ENCODE measurements at regions of chr2 and their contacts with region 1.

Region 1: DNA sequence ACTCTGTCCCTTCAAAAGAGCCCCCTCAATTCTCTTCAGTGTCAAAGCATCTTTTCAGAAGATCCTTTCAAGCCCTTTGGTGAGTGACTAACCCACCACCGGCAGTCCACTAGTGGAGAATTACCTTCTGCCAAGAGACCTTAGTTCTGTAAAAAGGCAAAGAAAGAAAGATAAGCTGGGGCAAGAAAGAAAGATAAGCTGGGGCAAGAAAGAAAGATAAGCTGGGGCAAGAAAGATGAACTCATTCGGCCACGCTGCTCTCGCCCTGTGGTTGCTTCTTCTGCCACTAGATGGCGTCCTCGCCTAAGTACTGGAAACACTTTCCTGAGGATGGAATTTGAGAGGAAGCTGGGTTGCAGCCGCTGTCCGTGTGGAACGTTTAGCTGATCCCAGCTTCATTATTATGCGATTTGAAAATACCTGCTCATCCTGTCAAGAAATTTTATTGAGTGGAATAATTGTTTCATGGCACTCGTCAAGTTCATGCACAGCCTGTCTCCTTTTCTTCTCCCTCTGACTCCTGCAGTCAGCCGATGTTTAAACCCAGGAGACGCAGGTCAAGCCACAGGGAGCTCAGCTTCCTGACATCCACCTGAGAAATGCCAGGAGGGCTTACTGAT is 17.3 kb upstream of the ANXA4 start:
- DNase-seq: peak; percentile 74
- ATAC-seq: peak; percentile 75
- H3K4me3 Mint-ChIP-seq: peak overlapping the region; percentile 52
- H3K27ac Mint-ChIP-seq: no peak overlapping the region
- H3K4me1 Mint-ChIP-seq: peaks cover 6% of the 10 kb centered on the region
- H3K27me3 Mint-ChIP-seq: peaks cover 6% of the 10 kb centered on the region
- CTCF ChIP-seq: peak; percentile 84

Region 2: DNA sequence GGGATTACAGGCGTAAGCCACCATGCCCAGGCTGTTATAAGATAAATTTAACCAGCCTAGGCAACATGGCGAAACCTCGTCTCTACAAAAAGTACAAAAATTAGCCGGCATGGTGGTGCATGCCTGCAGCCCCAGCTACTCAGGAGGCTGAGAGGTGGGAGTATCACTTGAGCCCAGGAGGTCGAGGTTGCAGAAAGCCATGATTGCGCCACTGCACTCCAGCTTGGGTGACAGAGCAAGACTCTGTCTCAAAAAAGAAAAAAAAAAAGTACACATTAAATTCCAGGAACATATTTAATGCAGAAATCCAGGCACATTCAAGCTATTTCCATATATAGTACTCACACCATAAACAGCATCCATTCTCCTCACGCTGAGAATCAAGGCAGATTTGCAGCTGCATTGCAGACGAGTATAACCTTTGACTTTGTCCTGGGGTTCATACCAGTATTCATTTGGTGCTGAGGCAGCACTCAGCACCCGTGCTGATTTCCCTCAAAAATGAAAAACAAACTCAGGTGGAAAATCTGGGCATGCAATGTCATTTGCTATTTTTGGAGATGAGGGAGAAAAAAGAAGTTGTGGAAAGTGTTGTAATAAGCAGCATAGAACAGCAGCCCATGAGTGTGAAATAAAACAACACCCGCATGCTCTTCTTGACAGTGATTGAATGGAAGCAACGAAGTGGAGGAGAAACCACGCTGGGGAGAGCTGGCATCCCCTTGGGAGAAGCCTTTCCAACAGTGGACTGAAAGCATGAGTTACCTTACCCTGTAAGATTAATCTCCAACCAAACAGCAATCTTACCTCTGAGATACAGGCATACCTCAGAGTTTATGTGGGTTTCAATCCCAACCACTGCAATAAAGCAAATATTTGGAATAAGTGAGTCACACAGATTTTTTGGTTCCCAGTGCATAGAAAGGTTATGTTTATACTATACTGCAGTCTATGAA is 29.5 kb before region 1 on chr2:
- CTCF ChIA-PET with region 1: no interaction called
- POLR2A ChIA-PET with region 1: no interaction called
- intact Hi-C with region 1: no loop called
- DNase-seq: no peak
- ATAC-seq: no peak
- H3K4me3 Mint-ChIP-seq: no peak overlapping the region
- H3K27ac Mint-ChIP-seq: no peak overlapping the region
- H3K4me1 Mint-ChIP-seq: peaks cover 28% of the 10 kb centered on the region
- H3K27me3 Mint-ChIP-seq: peaks cover 46% of the 10 kb centered on the region
- CTCF ChIP-seq: no peak

Region 3: GRCh38 chr2:69741619-69742466 is 17.2 kb after region 1 on chr2 and contains the start of gene ANXA4:
- CTCF ChIA-PET with region 1: interaction called, 21 read pairs
- POLR2A ChIA-PET with region 1: interaction called, 9 read pairs
- intact Hi-C with region 1: loop called (anchors 2 kb)
- DNase-seq: peak; percentile 64
- ATAC-seq: peak; percentile 85
- H3K4me3 Mint-ChIP-seq: peak within 1 kb of the TSS; percentile 95
- H3K27ac Mint-ChIP-seq: peak within 1 kb of the TSS; percentile 89
- H3K4me1 Mint-ChIP-seq: peaks cover 39% of the 10 kb centered on the region
- H3K27me3 Mint-ChIP-seq: no peaks in the 10 kb centered on the region
- CTCF ChIP-seq: no peak
- total RNA-seq, gene ANXA4: 32.0 and 35.4 TPM in 2 replicates

Region 4: GRCh38 chr2:69774984-69775982 is 50.6 kb after region 1 on chr2:
- CTCF ChIA-PET with region 1: interaction called, 11 read pairs
- POLR2A ChIA-PET with region 1: no interaction called
- intact Hi-C with region 1: no loop called
- DNase-seq: no peak
- ATAC-seq: peak; percentile 81
- H3K4me3 Mint-ChIP-seq: peak overlapping the region; percentile 67
- H3K27ac Mint-ChIP-seq: peak overlapping the region; percentile 86
- H3K4me1 Mint-ChIP-seq: peaks cover 68% of the 10 kb centered on the region
- H3K27me3 Mint-ChIP-seq: no peaks in the 10 kb centered on the region
- CTCF ChIP-seq: no peak

Region 5: DNA sequence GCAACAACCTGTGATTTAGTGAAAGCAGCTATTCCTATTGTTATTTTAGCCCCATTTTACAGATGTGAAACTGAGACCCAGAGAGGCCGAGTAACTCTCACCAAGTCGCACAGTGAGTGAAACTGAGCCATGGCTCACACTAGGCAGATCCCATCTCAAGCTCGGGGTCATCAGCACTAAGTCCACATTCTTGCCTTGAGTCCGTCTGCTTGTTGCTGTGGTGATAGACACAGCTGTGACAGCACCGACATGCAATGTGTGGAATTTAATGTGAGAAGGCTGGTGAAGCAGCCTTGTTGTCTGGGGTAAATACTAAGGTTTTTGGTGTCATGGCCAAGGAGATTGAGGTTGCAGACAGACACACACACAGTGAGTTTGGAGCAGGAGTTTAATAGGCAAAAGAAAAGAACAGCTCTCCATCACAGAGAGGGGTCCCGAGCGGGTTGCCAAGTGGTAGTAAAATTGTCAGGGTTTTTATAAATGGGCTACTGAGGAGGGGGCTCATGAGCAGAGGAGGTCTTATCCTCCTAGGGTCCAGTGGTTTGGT is 64.6 kb after region 1 on chr2:
- CTCF ChIA-PET with region 1: interaction called, 17 read pairs
- POLR2A ChIA-PET with region 1: no interaction called
- intact Hi-C with region 1: no loop called
- DNase-seq: no peak
- ATAC-seq: peak; percentile 26
- H3K4me3 Mint-ChIP-seq: peak overlapping the region; percentile 21
- H3K27ac Mint-ChIP-seq: peak overlapping the region; percentile 37
- H3K4me1 Mint-ChIP-seq: peaks cover 41% of the 10 kb centered on the region
- H3K27me3 Mint-ChIP-seq: no peaks in the 10 kb centered on the region
- CTCF ChIP-seq: no peak

Region 6: DNA sequence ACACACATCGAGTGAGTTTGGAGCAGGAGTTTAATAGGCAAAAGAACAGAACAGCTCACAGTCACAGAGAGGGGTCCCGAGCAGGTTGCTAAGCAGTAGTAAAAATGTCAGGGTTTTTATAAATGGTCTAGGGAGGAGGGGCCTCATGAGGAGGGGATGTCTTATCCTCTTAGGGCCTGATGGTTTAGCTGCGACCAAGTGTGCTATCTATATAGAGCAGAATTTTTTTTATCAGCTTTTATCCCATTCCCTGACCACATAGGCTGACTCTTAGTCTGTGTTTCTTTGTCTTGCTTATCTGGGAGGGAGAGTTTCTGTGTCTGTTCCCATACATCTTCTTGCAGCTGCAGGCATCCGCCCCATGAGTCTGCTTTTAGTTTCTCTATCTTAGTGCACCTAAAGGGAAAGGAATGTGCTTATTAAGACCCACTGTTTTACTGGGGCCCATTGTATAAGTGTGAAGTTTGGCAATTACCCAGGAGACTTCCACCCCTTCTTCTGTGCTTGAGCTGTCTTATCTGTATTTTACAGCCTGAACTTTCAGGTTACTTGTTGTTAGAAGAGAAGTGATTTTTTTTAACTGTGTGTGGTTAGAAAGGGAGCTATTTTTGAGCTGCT is 74.4 kb after region 1 on chr2:
- CTCF ChIA-PET with region 1: interaction called, 24 read pairs
- POLR2A ChIA-PET with region 1: interaction called, 3 read pairs
- intact Hi-C with region 1: no loop called
- DNase-seq: no peak
- ATAC-seq: peak; percentile 60
- H3K4me3 Mint-ChIP-seq: peak overlapping the region; percentile 73
- H3K27ac Mint-ChIP-seq: peak overlapping the region; percentile 76
- H3K4me1 Mint-ChIP-seq: peaks cover 60% of the 10 kb centered on the region
- H3K27me3 Mint-ChIP-seq: no peaks in the 10 kb centered on the region
- CTCF ChIP-seq: no peak

Region 7: DNA sequence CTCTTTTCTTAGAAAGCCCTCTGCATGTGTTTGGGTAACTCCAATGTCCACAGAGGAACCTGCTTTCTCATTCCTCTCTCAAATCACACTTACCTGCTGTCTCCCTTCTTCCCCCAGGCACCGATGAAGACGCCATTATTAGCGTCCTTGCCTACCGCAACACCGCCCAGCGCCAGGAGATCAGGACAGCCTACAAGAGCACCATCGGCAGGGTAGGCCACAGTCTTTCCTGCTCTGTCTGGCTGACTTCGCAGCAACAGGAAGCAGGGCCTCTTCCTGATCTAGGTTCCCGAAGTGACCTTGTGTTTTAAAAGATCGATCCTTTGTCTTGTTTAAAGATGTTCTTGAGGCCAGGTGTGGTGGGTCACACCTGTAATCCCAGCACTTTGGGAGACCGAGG is 79.8 kb after region 1 on chr2:
- CTCF ChIA-PET with region 1: interaction called, 24 read pairs
- POLR2A ChIA-PET with region 1: interaction called, 3 read pairs
- intact Hi-C with region 1: no loop called
- DNase-seq: no peak
- ATAC-seq: no peak
- H3K4me3 Mint-ChIP-seq: peak overlapping the region; percentile 41
- H3K27ac Mint-ChIP-seq: peak overlapping the region; percentile 37
- H3K4me1 Mint-ChIP-seq: peaks cover 46% of the 10 kb centered on the region
- H3K27me3 Mint-ChIP-seq: no peaks in the 10 kb centered on the region
- CTCF ChIP-seq: no peak

Region 8: GRCh38 chr2:69829256-69830046 is 104.8 kb after region 1 on chr2 and contains the start of gene GMCL1:
- CTCF ChIA-PET with region 1: interaction called, 11 read pairs
- POLR2A ChIA-PET with region 1: no interaction called
- intact Hi-C with region 1: no loop called
- DNase-seq: peak; percentile 99
- ATAC-seq: peak; percentile 95
- H3K4me3 Mint-ChIP-seq: peak within 1 kb of the TSS; percentile 94
- H3K27ac Mint-ChIP-seq: peak within 1 kb of the TSS; percentile 96
- H3K4me1 Mint-ChIP-seq: peaks cover 29% of the 10 kb centered on the region
- H3K27me3 Mint-ChIP-seq: no peaks in the 10 kb centered on the region
- CTCF ChIP-seq: no peak
- total RNA-seq, gene GMCL1: 8.0 and 13.0 TPM in 2 replicates

Measured in activated B cell treated with CpG ODN at 0.5 μM for 24 hours (primary cell).